Dorsolateral prefrontal cortex (tissue), 120 donors: ENCODE measurements at regions of chr19 and their contacts with region 1.

Region 1: DNA sequence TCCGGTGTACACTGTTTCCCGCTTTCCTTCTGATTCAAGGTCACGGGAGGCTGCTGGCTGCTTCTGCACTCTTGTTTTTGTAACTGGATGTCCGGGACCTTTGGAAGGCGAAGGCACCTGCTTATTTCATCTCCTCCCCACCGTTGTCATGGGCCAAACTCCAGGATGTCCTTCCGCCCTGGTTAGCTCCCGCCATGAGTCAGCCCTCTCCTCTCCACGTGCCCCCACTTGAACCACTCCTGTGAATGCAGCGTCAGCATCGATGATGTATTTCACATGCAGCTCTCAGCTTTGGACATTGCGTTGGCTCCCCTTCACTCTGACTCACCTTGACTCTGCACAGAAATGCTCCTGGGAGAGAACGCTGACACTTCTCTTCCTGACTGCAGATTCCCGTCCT is 5.5 kb upstream of the GALP start:
- DNase-seq: no peak
- H3K4me3 ChIP-seq: no peak overlapping the region
- H3K27ac ChIP-seq: no peak overlapping the region
- H3K27me3 ChIP-seq: peaks cover 0 to 15% (median 0%) of the 10 kb centered on the region in 45 donors
- CTCF ChIP-seq: no peak

Region 2: DNA sequence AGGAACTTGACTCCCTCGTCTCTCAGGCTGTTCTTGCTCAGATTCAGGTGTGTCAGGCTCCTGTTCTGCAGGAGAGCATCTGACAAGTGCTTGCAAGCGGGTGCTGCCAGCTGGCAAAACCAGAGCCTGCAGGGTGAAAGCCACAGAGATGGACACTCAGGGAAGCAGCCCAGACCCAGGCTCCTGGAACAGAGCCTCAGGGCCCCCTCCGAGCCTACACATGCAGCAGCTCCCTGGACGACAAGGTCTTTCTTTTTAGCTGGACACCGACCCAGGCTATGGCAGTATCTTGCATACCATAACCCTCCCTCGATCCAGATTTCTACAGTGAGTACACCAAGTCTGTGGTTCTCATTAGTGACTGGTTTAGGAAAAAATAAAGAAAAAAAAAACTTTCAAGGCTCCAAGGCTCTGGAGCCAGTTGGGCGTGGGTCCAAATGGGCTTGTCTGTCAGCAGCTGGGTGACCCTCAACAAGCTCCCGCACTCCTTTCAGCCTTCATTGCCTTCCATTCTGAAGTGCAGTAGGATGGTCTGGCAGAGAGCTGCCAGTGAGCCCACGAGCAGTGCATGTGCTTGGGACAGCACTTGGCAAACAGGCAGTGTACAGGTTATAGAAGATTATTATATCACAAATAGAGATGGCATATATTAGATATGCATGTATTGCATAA is 268.0 kb before region 1 on chr19:
- intact Hi-C with region 1: no loop called
- DNase-seq: no peak
- H3K4me3 ChIP-seq: no peak overlapping the region
- H3K27ac ChIP-seq: no peak overlapping the region
- H3K27me3 ChIP-seq: peaks cover 0 to 14% (median 0%) of the 10 kb centered on the region in 45 donors
- CTCF ChIP-seq: no peak

Region 3: DNA sequence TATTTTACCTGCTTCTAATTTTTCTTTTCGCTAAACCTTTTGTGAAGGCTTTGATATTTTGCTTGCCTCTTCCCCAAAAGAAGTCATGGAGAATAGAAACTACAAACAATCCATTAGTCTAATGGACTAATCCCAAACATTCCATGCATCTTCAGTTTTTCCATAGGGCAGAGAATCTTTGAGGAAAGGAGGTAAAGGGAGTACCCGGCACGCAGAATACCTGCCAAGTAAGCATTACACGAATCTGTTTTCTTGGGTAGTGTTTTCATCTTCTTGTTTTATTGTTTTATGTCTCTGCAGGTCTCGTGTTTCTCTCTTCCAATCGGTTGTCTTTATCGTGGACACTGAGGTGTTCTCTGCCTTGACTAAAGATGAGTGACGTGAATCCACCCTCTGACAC is 222.7 kb before region 1 on chr19 and contains the start of gene NLRP8:
- intact Hi-C with region 1: no loop called
- DNase-seq: no peak
- H3K4me3 ChIP-seq: no peak within 1 kb of the TSS
- H3K27ac ChIP-seq: no peak within 1 kb of the TSS
- H3K27me3 ChIP-seq: peaks cover 0 to 10% (median 0%) of the 10 kb centered on the region in 45 donors
- CTCF ChIP-seq: no peak
- total RNA-seq, gene NLRP8: not detected

Region 4: GRCh38 chr19:56076498-56076897 is 93.8 kb before region 1 on chr19:
- intact Hi-C with region 1: loop called (anchors 5 to 10 kb)
- DNase-seq: peak in 3 of 10 donors; percentile 27 to 40 (median 37)
- H3K4me3 ChIP-seq: no peak overlapping the region
- H3K27ac ChIP-seq: no peak overlapping the region
- H3K27me3 ChIP-seq: no peaks in the 10 kb centered on the region
- CTCF ChIP-seq: peak; percentile 27 to 82 (median 72)